ENCODE measurements at regions of chr5 and their contacts with region 1.

Region 1: GRCh38 chr5:136080483-136081216 is 51.9 kb downstream of the TGFBI start:
- DNase-seq: peak; percentile 85 to 94
- H3K4me3 ChIP-seq: peak overlapping the region; percentile 65
- H3K27ac ChIP-seq: peak overlapping the region; percentile 26
- H3K4me1 ChIP-seq: peaks cover 5% of the 10 kb centered on the region
- H3K27me3 ChIP-seq: no peaks in the 10 kb centered on the region
- CTCF ChIP-seq: no peak

Region 2: GRCh38 chr5:135887351-135887864 is 193.2 kb before region 1 on chr5:
- CTCF ChIA-PET with region 1: no interaction called
- POLR2A ChIA-PET with region 1: no interaction called
- intact Hi-C with region 1: loop called (anchors 1 kb)
- DNase-seq: peak; percentile 56 to 65
- H3K4me3 ChIP-seq: no peak overlapping the region
- H3K27ac ChIP-seq: no peak overlapping the region
- H3K4me1 ChIP-seq: peaks cover 15% of the 10 kb centered on the region
- H3K27me3 ChIP-seq: peaks cover 20% of the 10 kb centered on the region
- CTCF ChIP-seq: peak; percentile 90

Region 3: DNA sequence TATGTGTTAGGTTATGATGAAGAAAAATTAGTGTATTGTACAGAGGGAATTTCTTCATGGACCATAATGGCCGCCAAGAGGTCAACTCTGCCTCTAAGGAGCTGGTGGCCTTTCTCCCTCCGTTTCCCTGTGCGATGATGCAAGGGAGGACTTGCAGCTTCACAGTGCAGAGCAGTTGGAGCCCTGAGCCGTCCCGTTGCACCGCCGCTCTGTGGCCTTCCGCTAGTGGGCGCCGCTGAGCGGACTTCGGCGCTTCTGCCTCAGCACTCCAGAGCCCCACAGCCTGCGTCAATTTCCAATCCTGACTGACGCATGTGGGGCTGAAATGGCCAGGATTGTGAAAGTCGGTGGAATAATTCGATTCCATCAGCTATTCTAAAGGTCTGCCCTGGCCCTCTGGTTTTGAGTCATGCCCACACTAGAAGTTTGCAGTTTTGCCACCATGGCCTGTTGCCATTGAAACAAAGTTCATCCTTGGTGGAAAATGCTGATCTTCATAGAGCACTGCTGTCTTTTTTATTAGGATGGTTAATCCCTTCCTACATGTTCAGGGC is 103.2 kb before region 1 on chr5:
- CTCF ChIA-PET with region 1: no interaction called
- POLR2A ChIA-PET with region 1: no interaction called
- intact Hi-C with region 1: loop called (anchors 1 kb)
- DNase-seq: peak in 1 of 2 experiments; percentile 77
- H3K4me3 ChIP-seq: no peak overlapping the region
- H3K27ac ChIP-seq: no peak overlapping the region
- H3K4me1 ChIP-seq: no peaks in the 10 kb centered on the region
- H3K27me3 ChIP-seq: no peaks in the 10 kb centered on the region
- CTCF ChIP-seq: no peak

Region 4: GRCh38 chr5:136174021-136174659 is 93.5 kb after region 1 on chr5:
- CTCF ChIA-PET with region 1: interaction called, 4 read pairs
- POLR2A ChIA-PET with region 1: no interaction called
- intact Hi-C with region 1: loop called (anchors 1 kb)
- DNase-seq: no peak
- H3K4me3 ChIP-seq: no peak overlapping the region
- H3K27ac ChIP-seq: no peak overlapping the region
- H3K4me1 ChIP-seq: no peaks in the 10 kb centered on the region
- H3K27me3 ChIP-seq: no peaks in the 10 kb centered on the region
- CTCF ChIP-seq: peak; percentile 77